ENCODE measurements at regions of chr12 and their contacts with region 1.

Region 1: GRCh38 chr12:19002216-19002615 is 127.3 kb upstream of the PLEKHA5 start:
- DNase-seq: no peak
- H3K4me3 ChIP-seq: no peak overlapping the region
- H3K27ac ChIP-seq: no peak overlapping the region
- H3K4me1 ChIP-seq: peaks cover 5 to 34% (median 19%) of the 10 kb centered on the region in 4 experiments; a peak in 6 of 7 replicates
- H3K27me3 ChIP-seq: no peaks in the 10 kb centered on the region
- CTCF ChIP-seq: no peak
- EP300 ChIP-seq: no peak
- POLR2A ChIP-seq: no peak
- RAD21 ChIP-seq: no peak

Region 2: DNA sequence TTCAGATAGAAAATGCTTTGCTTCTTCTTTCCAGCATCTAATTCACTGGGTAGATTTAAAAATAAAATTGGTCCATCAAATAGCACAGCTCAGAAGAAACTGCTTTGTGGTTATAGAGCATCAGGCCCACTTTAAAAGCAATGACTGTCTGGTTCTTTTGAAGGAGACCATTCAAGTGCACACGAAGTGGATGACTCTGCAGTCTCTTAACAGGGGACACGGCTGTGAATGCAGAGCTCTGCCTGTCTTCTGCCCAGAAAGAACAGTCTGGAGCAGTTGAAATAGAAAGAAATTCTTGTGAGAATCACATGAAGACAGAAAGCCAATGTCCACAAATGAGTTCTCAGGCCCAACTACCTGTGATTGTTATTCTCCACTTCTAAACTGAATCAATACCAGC is 11.4 kb before region 1 on chr12:
- CTCF ChIA-PET with region 1: no interaction called
- POLR2A ChIA-PET with region 1: interaction called, 10 read pairs
- DNase-seq: no peak
- H3K4me3 ChIP-seq: no peak overlapping the region
- H3K27ac ChIP-seq: no peak overlapping the region
- H3K4me1 ChIP-seq: no peaks in the 10 kb centered on the region; a peak in 2 of 7 replicates
- H3K27me3 ChIP-seq: peaks cover 0 to 1% (median 0%) of the 10 kb centered on the region in 4 experiments; a peak in 1 of 7 replicates
- CTCF ChIP-seq: no peak
- EP300 ChIP-seq: no peak
- POLR2A ChIP-seq: no peak
- RAD21 ChIP-seq: no peak

Region 3: DNA sequence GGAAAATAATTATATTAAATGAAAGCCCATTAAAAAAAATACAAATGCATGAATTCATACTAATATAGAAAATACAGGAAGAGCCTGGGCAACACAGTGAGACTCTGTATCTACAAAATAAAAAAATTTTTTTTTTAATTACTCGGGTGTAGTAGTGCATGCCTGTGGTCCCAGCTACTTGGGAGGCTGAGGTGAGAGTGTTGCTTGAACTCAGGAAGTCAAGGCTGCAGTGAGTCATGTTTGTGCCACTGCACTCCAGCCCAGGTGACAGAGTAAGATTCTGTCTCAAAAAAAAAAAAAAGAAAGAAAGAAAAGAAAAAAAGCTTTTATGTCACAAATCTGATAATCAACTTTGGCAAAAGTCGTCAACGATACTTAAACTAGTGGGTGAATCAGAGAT is 46.7 kb after region 1 on chr12:
- CTCF ChIA-PET with region 1: no interaction called
- POLR2A ChIA-PET with region 1: no interaction called
- DNase-seq: no peak
- H3K4me3 ChIP-seq: no peak overlapping the region
- H3K27ac ChIP-seq: no peak overlapping the region
- H3K4me1 ChIP-seq: no peaks in the 10 kb centered on the region
- H3K27me3 ChIP-seq: no peaks in the 10 kb centered on the region
- CTCF ChIP-seq: no peak
- EP300 ChIP-seq: no peak
- POLR2A ChIP-seq: no peak
- RAD21 ChIP-seq: no peak